ENCODE measurements at regions of chr20 and their contacts with region 1.

Region 1: GRCh38 chr20:2651772-2652723 is at the start of gene NOP56:
- DNase-seq: peak; percentile 90 to 96 (median 94)
- H3K4me3 ChIP-seq: peak within 1 kb of the TSS; percentile 96
- H3K4me3 Mint-ChIP-seq: peak within 1 kb of the TSS; percentile 89 to 95 (median 91)
- H3K27ac ChIP-seq: peak within 1 kb of the TSS; percentile 84
- H3K27ac Mint-ChIP-seq: peak within 1 kb of the TSS; percentile 76 to 96 (median 91)
- H3K4me1 ChIP-seq: peaks cover 28% of the 10 kb centered on the region
- H3K4me1 Mint-ChIP-seq: peaks cover 28 to 50% (median 30%) of the 10 kb centered on the region in 3 donors
- H3K27me3 ChIP-seq: no peaks in the 10 kb centered on the region
- H3K27me3 Mint-ChIP-seq: peaks cover 0 to 2% of the 10 kb centered on the region in 2 donors
- total RNA-seq, gene NOP56: 888 to 920 TPM

Region 2: GRCh38 chr20:2470423-2471193 is 181.4 kb before region 1 on chr20 and contains the start of gene SNRPB:
- CTCF ChIA-PET with region 1: interaction called, 3 read pairs
- POLR2A ChIA-PET with region 1: interaction called, 16 read pairs
- DNase-seq: peak; percentile 93 to 97 (median 94)
- H3K4me3 ChIP-seq: peak within 1 kb of the TSS; percentile 89
- H3K4me3 Mint-ChIP-seq: peak within 1 kb of the TSS; percentile 96 to 99 (median 98)
- H3K27ac ChIP-seq: peak within 1 kb of the TSS; percentile 94
- H3K27ac Mint-ChIP-seq: peak within 1 kb of the TSS; percentile 93 to 100 (median 97)
- H3K4me1 ChIP-seq: peaks cover 30% of the 10 kb centered on the region
- H3K4me1 Mint-ChIP-seq: peaks cover 38 to 48% (median 42%) of the 10 kb centered on the region in 3 donors
- H3K27me3 ChIP-seq: no peaks in the 10 kb centered on the region
- H3K27me3 Mint-ChIP-seq: peaks cover 0 to 3% of the 10 kb centered on the region in 2 donors
- total RNA-seq, gene SNRPB: 423 to 432 TPM

Region 3: DNA sequence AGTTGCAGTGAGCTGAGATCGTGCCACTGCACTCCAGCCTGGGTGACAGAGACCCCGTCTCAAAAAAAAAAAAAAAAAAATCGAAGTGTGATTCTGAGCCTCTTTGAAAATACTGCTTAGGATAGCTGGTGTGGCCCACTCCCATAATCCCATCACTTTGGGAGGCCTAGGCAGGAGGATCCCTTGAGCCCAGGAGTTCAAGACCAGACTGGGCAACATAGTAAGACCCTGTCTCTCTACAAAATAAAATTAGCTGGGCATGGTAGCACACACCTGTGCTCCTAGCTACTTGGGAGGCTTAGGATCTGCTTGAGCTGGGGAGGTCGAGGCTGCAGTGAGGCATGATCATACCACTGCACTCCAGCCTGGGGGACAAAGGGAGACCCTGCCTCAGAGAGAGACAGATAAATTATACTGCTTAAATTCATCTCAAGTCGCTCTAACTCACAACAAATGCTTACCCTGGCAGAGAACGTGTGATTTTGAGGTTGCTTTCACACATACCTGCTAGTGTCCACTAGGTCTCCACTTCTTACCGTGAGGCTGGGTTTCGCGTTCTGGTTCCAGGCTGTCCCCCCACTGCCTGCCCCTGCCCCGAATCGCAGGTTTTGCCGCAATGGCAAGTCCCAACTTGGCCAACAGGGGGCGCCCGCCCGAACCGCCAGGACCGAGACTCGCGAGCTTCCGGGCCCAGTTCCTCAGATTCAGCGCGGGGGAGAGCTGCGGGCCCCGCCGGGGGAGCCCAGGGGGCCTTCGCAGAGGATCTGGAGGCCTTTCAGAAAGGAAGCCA is 127.9 kb before region 1 on chr20:
- CTCF ChIA-PET with region 1: interaction called, 13 read pairs
- POLR2A ChIA-PET with region 1: interaction called, 5 read pairs
- DNase-seq: peak; percentile 85 to 92 (median 87)
- H3K4me3 ChIP-seq: peak overlapping the region; percentile 84
- H3K4me3 Mint-ChIP-seq: peak overlapping the region; percentile 73 to 96 (median 92)
- H3K27ac ChIP-seq: peak overlapping the region; percentile 83
- H3K27ac Mint-ChIP-seq: peak overlapping the region in 7 of 8 donors; percentile 3 to 86 (median 75)
- H3K4me1 ChIP-seq: peaks cover 5% of the 10 kb centered on the region
- H3K4me1 Mint-ChIP-seq: peaks cover 12 to 19% (median 13%) of the 10 kb centered on the region in 3 donors
- H3K27me3 ChIP-seq: no peaks in the 10 kb centered on the region
- H3K27me3 Mint-ChIP-seq: peaks cover 0 to 1% of the 10 kb centered on the region in 2 donors

Region 4: GRCh38 chr20:2663887-2664719 is 12.1 kb after region 1 on chr20 and contains the start of gene IDH3B:
- CTCF ChIA-PET with region 1: interaction called, 21 read pairs
- POLR2A ChIA-PET with region 1: interaction called, 70 read pairs
- DNase-seq: peak; percentile 85 to 93 (median 89)
- H3K4me3 ChIP-seq: peak within 1 kb of the TSS; percentile 91
- H3K4me3 Mint-ChIP-seq: peak within 1 kb of the TSS; percentile 84 to 99 (median 90)
- H3K27ac ChIP-seq: peak within 1 kb of the TSS; percentile 78
- H3K27ac Mint-ChIP-seq: peak within 1 kb of the TSS; percentile 91 to 99 (median 95)
- H3K4me1 ChIP-seq: peaks cover 13% of the 10 kb centered on the region
- H3K4me1 Mint-ChIP-seq: peaks cover 17 to 29% (median 26%) of the 10 kb centered on the region in 3 donors
- H3K27me3 ChIP-seq: no peaks in the 10 kb centered on the region
- H3K27me3 Mint-ChIP-seq: no peaks in the 10 kb centered on the region
- total RNA-seq, gene IDH3B: 138 to 145 TPM

Region 5: GRCh38 chr20:2873010-2873746 is 221.1 kb after region 1 on chr20 and contains the start of gene PTPRA:
- CTCF ChIA-PET with region 1: no interaction called
- POLR2A ChIA-PET with region 1: interaction called, 10 read pairs
- DNase-seq: peak; percentile 85 to 93 (median 87)
- H3K4me3 ChIP-seq: peak within 1 kb of the TSS; percentile 97
- H3K4me3 Mint-ChIP-seq: peak within 1 kb of the TSS; percentile 90 to 95 (median 94)
- H3K27ac ChIP-seq: peak within 1 kb of the TSS; percentile 76
- H3K27ac Mint-ChIP-seq: peak within 1 kb of the TSS; percentile 82 to 97 (median 92)
- H3K4me1 ChIP-seq: peaks cover 39% of the 10 kb centered on the region
- H3K4me1 Mint-ChIP-seq: peaks cover 44 to 50% (median 47%) of the 10 kb centered on the region in 3 donors
- H3K27me3 ChIP-seq: no peaks in the 10 kb centered on the region
- H3K27me3 Mint-ChIP-seq: no peaks in the 10 kb centered on the region
- total RNA-seq, gene PTPRA: 51.6 to 57.8 TPM

Measured in CD8-positive, alpha-beta memory T cell (primary cell).